B cell (primary cell): ENCODE measurements at regions of chr2 and their contacts with region 1.

Region 1: DNA sequence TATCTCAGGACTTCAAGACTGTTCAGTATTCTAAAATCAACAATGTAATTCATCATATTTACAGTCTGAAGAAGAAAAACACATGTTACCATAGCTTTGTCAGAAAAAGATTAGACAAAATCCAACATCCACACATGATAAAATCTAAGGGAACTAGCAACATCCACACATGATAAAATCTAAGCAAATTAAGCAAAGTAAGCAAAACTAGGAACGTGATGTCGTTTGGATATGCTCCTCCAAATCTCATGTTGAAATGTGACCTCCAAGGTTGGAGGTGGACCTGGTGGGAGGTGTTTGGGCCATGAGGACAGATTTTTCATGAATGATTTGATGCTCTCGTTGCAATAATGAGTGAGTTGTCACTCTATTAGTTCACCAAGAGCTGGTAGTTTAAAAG is 717.3 kb upstream of the HS6ST1 start:
- DNase-seq: no peak
- ATAC-seq: no peak
- H3K4me3 ChIP-seq: no peak overlapping the region
- H3K4me3 Mint-ChIP-seq: no peak overlapping the region
- H3K27ac ChIP-seq: no peak overlapping the region
- H3K27ac Mint-ChIP-seq: no peak overlapping the region
- H3K4me1 ChIP-seq: no peaks in the 10 kb centered on the region
- H3K4me1 Mint-ChIP-seq: no peaks in the 10 kb centered on the region
- H3K27me3 ChIP-seq: no peaks in the 10 kb centered on the region
- H3K27me3 Mint-ChIP-seq: peaks cover 6% of the 10 kb centered on the region
- CTCF ChIP-seq: no peak

Region 2: DNA sequence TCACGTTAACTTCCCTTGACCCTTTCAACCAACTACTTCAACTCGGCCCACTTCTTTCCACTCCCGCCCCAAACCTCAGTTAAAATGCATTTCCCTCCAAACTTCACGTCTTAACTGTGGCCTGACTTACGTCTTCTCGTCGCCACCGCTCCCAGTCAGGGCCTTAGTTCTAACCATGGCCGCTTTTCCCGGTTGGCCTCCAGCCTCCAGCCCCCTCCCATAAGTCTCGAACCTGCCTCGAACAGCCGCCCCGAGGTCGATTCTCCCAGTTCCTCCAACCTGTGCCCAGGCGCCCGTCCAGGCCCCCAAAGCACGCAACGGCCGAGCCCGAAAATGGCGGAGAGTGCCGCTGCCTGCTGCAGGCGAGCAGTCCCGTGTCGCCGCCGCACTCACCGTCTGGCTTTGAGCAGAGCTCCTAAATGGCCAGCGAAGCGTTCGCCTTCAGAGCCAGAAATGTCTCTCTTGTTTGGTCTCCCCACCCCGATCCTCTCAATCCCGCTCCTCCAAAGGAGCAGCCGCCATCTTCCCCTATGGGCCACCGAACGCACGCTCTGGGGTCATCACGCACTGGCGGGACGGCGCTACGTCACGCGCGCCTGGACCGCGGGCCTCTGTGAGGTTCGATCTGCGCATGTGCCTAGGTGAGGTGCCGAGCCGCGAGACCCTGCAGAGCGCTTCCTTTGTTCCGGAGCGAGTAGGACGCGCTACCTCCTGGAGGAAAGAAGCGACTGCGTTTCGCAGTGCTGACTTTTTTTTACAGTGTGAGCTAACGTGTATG is 1225.2 kb before region 1 on chr2 and contains the start of gene WDR33:
- CTCF ChIA-PET with region 1: no interaction called
- POLR2A ChIA-PET with region 1: no interaction called
- intact Hi-C with region 1: no loop called
- DNase-seq: peak; percentile 96
- ATAC-seq: peak; percentile 97
- H3K4me3 ChIP-seq: peak within 1 kb of the TSS; percentile 66 to 99 (median 78)
- H3K4me3 Mint-ChIP-seq: peak within 1 kb of the TSS; percentile 97
- H3K27ac ChIP-seq: peak within 1 kb of the TSS; percentile 91 to 96
- H3K27ac Mint-ChIP-seq: peak within 1 kb of the TSS; percentile 99
- H3K4me1 ChIP-seq: peaks cover 30 to 37% of the 10 kb centered on the region in 2 donors
- H3K4me1 Mint-ChIP-seq: peaks cover 46% of the 10 kb centered on the region
- H3K27me3 ChIP-seq: no peaks in the 10 kb centered on the region
- H3K27me3 Mint-ChIP-seq: no peaks in the 10 kb centered on the region
- CTCF ChIP-seq: no peak
- total RNA-seq, gene WDR33: 95.2 and 101 TPM in 2 replicates

Region 3: DNA sequence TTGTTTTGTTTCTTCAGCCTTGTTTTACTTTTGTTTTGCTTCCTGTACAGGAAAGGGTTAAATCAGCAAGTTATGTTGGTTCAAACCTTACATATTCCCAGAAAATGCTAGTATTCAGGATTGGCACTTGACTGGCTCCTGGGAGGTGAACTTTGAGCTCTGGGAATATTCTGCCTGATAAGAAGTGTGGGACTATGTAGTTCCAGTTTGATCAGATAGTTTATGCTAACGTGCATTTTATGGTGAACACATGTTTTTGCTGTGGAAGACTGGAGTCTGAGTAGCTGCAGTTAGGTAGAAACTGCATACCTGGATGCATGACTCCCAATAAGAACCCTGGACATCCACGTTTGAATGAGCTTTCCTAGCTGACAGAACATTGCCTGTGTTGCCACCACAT is 114.2 kb before region 1 on chr2:
- CTCF ChIA-PET with region 1: no interaction called
- POLR2A ChIA-PET with region 1: no interaction called
- intact Hi-C with region 1: no loop called
- DNase-seq: no peak
- ATAC-seq: no peak
- H3K4me3 ChIP-seq: no peak overlapping the region
- H3K4me3 Mint-ChIP-seq: no peak overlapping the region
- H3K27ac ChIP-seq: no peak overlapping the region
- H3K27ac Mint-ChIP-seq: no peak overlapping the region
- H3K4me1 ChIP-seq: no peaks in the 10 kb centered on the region
- H3K4me1 Mint-ChIP-seq: no peaks in the 10 kb centered on the region
- H3K27me3 ChIP-seq: peaks cover 0 to 4% (median 0%) of the 10 kb centered on the region in 4 experiments
- H3K27me3 Mint-ChIP-seq: peaks cover 13% of the 10 kb centered on the region
- CTCF ChIP-seq: no peak

Region 4: GRCh38 chr2:129103936-129104879 is 68.2 kb after region 1 on chr2:
- CTCF ChIA-PET with region 1: no interaction called
- POLR2A ChIA-PET with region 1: no interaction called
- intact Hi-C with region 1: no loop called
- DNase-seq: no peak
- ATAC-seq: no peak
- H3K4me3 ChIP-seq: no peak overlapping the region
- H3K4me3 Mint-ChIP-seq: no peak overlapping the region
- H3K27ac ChIP-seq: no peak overlapping the region
- H3K27ac Mint-ChIP-seq: no peak overlapping the region
- H3K4me1 ChIP-seq: no peaks in the 10 kb centered on the region
- H3K4me1 Mint-ChIP-seq: no peaks in the 10 kb centered on the region
- H3K27me3 ChIP-seq: no peaks in the 10 kb centered on the region
- H3K27me3 Mint-ChIP-seq: peaks cover 16% of the 10 kb centered on the region
- CTCF ChIP-seq: no peak

Region 5: GRCh38 chr2:129877289-129877779 is 841.3 kb after region 1 on chr2:
- CTCF ChIA-PET with region 1: no interaction called
- POLR2A ChIA-PET with region 1: interaction called, 10 read pairs
- intact Hi-C with region 1: no loop called
- DNase-seq: peak; percentile 92
- ATAC-seq: peak; percentile 95
- H3K4me3 ChIP-seq: peak overlapping the region; percentile 88 to 94 (median 93)
- H3K4me3 Mint-ChIP-seq: peak overlapping the region; percentile 97
- H3K27ac ChIP-seq: peak overlapping the region; percentile 54 to 78
- H3K27ac Mint-ChIP-seq: peak overlapping the region; percentile 92
- H3K4me1 ChIP-seq: peaks cover 7 to 15% of the 10 kb centered on the region in 2 donors
- H3K4me1 Mint-ChIP-seq: peaks cover 13% of the 10 kb centered on the region
- H3K27me3 ChIP-seq: no peaks in the 10 kb centered on the region
- H3K27me3 Mint-ChIP-seq: peaks cover 4% of the 10 kb centered on the region
- CTCF ChIP-seq: no peak